Dorsolateral prefrontal cortex (tissue), 120 donors: ENCODE measurements at regions of chr7 and their contacts with region 1.

Region 1: DNA sequence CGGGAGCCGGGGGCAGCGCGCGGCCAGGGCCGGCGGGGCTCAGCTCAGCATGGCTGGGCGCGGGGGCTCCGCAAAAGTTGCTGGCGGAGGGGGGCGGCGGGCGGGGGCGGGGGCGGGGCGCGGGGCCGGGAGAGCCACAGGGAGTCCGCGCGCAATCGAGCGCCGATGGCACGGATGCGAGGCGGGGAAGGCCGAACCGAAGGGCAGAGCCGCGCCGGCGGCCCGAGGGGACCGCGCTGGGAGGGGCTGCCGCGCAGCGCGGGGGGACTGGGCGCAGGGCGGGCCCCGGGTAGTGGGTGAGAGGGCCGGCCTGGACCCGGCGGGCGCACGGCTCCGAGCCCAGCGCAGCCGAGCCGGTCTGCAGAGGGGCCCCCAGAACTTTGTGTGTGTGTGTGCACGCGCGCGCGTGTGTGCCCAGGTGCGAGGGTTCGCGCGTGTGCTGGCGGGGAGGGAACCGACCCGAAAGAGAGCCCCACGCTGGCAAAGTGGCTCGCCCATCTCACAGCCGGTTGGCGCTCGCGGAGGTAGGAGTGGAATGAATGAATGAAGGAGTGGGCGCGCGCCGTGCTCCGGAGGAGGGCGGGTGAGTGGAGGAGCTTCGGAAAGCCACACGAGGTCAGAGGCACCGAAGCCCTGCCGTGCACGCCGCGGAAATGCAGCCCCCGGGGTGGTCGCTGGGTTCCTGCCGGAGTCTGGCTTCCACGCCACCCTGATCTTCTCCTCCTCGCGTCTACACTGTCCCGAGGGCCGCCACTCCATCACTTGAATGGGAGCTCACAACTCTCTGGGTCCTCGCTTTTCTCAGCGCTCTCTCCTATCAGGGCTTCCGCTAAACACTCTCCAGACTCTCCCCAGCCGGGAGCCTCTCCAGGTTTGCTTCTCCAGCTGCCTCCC is at the start of gene HIPK2:
- DNase-seq: peak; percentile 57 to 83 (median 74)
- H3K4me3 ChIP-seq: peak within 1 kb of the TSS; percentile 73 to 94 (median 86)
- H3K27ac ChIP-seq: peak within 1 kb of the TSS; percentile 81 to 99 (median 96)
- H3K27me3 ChIP-seq: no peaks in the 10 kb centered on the region
- CTCF ChIP-seq: peak in 5 of 56 donors; percentile 2 to 17 (median 13)
- total RNA-seq, gene HIPK2: 106 to 688 (median 242) TPM

Region 2: GRCh38 chr7:139620676-139621344 is 157.4 kb before region 1 on chr7:
- intact Hi-C with region 1: no loop called
- DNase-seq: peak in 1 of 10 donors; percentile 37
- H3K4me3 ChIP-seq: no peak overlapping the region
- H3K27ac ChIP-seq: peak overlapping the region in 6 of 59 donors; percentile 16 to 68 (median 29)
- H3K27me3 ChIP-seq: no peaks in the 10 kb centered on the region
- CTCF ChIP-seq: peak; percentile 23 to 78 (median 61)

Region 3: DNA sequence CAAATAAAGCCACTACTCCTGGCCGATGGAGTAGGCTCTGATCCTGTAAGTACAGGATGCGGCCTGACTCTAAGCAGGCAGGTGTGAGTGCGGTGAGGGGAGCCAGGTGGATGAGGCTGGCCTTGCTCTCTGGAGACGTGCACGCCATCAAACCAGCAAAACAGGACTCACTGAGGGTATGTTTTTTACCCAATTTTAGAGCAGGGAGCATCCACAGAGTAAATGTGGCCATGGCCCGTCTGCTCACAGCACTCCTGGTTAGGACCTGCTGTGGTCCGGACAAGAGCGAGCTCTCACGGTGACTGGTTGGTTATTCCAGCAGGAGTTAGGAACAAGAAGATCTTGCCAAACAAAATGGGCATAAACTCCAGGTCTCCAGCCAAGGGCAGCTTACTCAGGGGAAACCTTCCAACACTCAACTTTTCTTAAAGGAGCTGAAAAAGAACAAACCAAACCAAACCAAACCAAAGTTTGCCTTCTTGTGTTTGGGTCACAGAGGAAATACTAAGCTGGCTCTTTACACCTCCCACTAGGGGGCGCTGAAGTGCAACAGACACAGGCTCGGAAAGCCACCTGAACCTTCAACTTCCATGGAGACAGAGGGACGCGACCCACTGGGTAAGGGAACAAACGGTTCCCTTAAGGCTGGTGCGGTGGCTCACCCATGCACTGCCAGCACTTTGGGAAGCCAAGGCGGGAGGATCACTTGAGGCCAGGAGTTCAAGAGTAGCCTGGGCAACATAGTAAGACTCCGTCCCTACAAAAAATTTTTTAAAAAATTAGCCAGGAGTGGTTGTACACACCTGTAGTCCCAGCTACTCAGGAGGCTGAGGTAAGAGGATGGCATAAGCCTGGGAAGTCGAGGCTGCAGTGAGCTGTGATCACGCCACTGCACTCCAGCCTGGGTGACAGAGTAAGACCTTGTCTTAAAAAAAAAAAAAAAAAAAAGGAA is 132.3 kb before region 1 on chr7:
- intact Hi-C with region 1: loop called (anchors 2 to 5 kb)
- DNase-seq: peak; percentile 66 to 89 (median 86)
- H3K4me3 ChIP-seq: peak overlapping the region in 3 of 59 donors; percentile 13 to 26 (median 16)
- H3K27ac ChIP-seq: peak overlapping the region in 58 of 59 donors; percentile 35 to 98 (median 92)
- H3K27me3 ChIP-seq: no peaks in the 10 kb centered on the region
- CTCF ChIP-seq: peak; percentile 80 to 97 (median 91)

Region 4: DNA sequence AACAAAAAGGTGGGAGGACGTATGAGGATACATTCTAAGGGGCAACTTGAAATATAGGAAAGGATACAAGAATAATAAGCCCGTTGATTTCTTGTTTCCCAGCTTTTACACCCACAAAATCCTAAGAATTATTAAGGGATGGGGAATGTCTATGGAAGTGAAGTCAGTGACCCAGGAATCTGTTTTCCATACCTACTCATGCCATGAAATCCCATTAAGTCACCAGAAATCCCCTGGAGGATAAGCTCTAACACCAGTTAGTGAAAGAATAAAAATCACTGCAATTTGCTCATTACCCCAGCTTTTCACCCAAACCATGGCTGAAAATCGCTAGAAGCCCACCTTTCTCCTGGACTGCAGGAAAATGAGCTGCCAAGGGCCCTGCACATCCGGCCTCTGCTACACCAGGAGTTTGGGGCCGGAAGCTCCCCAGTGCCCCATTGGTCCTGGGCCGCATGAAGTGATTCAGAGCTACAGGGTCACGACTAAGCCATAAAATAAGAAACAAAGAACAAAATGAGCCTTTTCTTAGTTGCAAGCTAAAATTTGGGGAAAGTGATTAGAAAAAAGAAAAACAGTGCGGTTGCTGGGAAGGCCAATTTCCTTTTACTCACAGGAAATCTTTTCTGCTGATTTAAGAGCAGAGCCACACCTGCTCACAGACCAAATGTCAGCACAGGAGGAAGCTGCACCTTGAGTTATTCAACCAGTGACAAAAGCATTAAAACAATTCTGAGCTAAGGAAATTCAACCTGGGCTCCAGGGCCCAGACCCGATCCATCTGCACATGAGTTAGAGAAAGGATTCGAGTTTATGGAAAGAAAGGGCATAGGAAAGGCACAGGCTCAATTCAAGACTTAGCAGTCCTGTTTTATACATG is 40.7 kb before region 1 on chr7:
- intact Hi-C with region 1: loop called (anchors 5 kb)
- DNase-seq: no peak
- H3K4me3 ChIP-seq: peak overlapping the region in 2 of 59 donors; percentile 10 to 25
- H3K27ac ChIP-seq: peak overlapping the region; percentile 41 to 99 (median 94)
- H3K27me3 ChIP-seq: no peaks in the 10 kb centered on the region
- CTCF ChIP-seq: no peak

Region 5: DNA sequence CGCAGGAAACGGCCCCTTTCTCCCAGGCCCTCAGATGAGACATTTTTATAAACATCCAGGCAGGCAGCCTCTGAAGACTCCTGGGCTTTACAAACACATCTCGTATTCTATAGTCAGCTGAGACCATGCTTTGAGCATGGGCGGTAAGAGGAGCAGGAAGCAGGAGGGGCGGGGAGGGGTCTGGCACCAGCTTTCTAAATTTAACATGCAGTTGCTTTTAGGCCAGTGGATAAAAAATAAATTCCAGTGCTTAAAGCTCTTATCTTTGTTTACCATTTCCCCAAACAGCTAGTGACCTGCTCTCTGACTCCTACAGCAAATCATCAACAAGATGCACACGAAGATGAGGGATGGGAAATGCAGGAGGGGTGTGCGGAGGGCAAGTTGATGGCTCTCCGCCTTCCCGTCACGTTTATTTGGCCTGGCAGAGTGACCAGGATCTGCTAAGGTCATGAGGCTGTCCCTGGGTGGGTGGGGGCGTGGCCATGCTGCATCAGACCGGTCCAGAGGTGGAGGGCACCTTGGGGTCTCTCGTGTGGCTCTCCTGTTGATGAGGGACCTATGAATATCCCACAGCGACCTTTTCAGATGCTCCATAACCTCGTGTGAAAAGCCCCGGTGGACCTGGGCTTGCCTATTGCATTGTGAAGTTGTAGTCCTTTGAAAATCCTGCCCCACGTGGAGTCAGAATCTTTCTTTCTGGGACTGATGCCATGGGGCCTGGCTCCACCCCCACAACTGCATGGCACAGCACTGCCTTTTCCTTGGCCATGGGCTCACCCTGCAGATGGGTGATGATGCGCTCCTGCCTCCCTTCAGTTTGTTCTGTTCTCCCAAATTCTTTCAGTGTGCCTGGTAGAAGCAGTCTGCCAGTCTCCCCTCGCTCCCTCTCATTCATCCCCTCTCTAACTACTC is 217.1 kb after region 1 on chr7:
- intact Hi-C with region 1: loop called (anchors 5 kb)
- DNase-seq: peak; percentile 15 to 90 (median 84)
- H3K4me3 ChIP-seq: no peak overlapping the region
- H3K27ac ChIP-seq: peak overlapping the region in 58 of 59 donors; percentile 67 to 97 (median 92)
- H3K27me3 ChIP-seq: no peaks in the 10 kb centered on the region
- CTCF ChIP-seq: peak in 22 of 56 donors; percentile 9 to 50 (median 20)